ENCODE measurements at regions of chr15 and their contacts with region 1.

Region 1: GRCh38 chr15:69452692-69453521 is at the start of gene RPLP1:
- DNase-seq: peak; percentile 92 to 98 (median 96)
- ATAC-seq: peak; percentile 85
- H3K4me3 ChIP-seq: peak within 1 kb of the TSS; percentile 98
- H3K4me3 Mint-ChIP-seq: peak within 1 kb of the TSS; percentile 95
- H3K27ac ChIP-seq: peak within 1 kb of the TSS; percentile 78 to 91
- H3K27ac Mint-ChIP-seq: peak within 1 kb of the TSS; percentile 94
- H3K4me1 ChIP-seq: peaks cover 38% of the 10 kb centered on the region
- H3K4me1 Mint-ChIP-seq: peaks cover 55% of the 10 kb centered on the region
- H3K27me3 ChIP-seq: no peaks in the 10 kb centered on the region
- H3K27me3 Mint-ChIP-seq: no peaks in the 10 kb centered on the region
- CTCF ChIP-seq: no peak
- total RNA-seq, gene RPLP1: 2,527 to 2,615 TPM

Region 2: DNA sequence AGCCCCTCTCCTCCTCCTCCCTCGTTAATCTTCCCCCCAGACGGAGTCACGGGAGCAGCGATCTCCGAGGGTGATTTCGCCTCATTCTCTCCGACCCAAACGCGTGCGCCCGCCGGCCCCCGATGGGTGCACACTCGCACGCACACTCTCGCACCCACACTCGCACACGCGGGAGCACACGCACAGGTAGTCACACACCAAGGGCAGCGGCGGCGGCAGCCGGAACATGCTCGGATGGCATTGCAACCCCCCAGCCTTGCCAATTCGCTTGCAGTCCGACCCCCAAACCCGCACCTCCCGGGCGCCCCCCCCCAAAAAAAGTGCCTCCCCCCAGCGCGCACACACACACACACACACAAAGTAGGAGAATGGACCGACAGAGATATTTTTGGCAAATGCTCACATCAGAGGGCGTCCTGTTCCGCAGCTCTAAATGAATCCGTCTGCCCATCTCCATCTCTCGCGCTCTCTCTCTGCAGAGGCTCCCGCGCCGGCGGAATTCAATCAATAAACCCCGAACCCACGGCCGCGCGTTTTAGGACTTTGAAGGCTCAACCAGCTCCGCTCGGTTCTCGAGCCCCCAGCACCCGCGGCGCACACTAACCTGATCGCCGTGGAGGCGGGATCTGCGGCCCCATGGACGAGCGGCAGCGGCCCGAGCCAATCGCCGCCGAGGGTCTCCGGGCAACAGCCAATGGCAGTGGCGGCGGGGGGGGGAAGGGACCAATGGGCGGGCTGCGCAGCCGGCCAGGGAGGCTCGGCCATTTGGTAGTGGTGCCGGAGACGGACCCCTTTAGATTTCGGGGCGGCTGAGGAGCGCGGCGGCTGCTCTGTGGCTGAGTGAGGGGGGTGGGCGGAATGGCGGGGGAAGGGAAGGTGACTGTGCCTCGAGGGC is 632.4 kb before region 1 on chr15 and contains the start of gene ANP32A:
- CTCF ChIA-PET with region 1: no interaction called
- POLR2A ChIA-PET with region 1: interaction called, 9 read pairs
- intact Hi-C with region 1: loop called in 1 of 2 experiments (anchors 10 kb)
- DNase-seq: peak; percentile 94 to 99 (median 96)
- ATAC-seq: peak; percentile 62
- H3K4me3 ChIP-seq: peak within 1 kb of the TSS; percentile 98
- H3K4me3 Mint-ChIP-seq: peak within 1 kb of the TSS; percentile 95
- H3K27ac ChIP-seq: peak within 1 kb of the TSS; percentile 74 to 89
- H3K27ac Mint-ChIP-seq: peak within 1 kb of the TSS; percentile 92
- H3K4me1 ChIP-seq: peaks cover 22% of the 10 kb centered on the region
- H3K4me1 Mint-ChIP-seq: peaks cover 36% of the 10 kb centered on the region
- H3K27me3 ChIP-seq: no peaks in the 10 kb centered on the region
- H3K27me3 Mint-ChIP-seq: no peaks in the 10 kb centered on the region
- CTCF ChIP-seq: no peak
- total RNA-seq, gene ANP32A: 55.1 to 57.3 TPM

Region 3: DNA sequence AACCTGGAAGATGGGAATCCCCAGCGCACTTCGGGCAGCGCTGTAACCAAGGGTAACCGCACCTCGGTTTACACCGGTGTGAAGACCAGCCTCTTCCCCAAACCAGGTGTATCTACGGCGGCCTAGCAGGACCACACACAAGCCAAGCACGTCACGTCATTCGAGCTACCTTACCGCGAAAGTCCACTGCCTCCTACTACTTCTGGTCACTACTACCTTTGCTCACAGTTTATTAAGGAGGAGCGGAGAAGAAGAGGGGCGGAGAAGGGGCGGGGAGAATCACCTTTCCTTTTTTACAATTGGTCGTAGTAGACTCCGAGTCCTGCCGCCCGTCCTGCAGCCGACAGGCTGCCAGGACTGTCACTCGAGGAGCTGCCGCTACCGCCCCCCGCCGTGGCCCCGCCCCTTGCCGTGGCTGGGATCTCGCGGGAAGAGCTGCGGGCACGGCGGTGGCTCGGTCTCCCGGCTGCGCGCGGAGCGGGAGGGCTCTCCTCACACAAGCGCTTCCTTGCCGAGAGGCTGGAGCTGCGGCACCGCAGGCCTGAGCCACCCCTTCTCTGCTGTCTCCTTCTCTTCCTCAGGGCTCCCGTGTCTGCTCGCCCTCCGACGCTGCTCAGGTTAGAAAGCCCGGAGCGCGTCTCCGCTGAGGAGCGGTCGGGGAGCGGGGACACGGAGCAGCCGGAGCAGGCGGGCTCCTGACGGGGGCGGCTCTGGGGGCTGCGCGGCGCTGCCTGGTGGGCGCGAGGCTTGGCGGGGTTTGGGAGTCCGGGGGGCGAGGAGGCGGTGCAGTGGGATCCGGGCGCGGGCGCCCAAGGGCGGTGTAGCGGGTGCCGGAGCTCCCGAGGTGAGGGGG is 292.5 kb before region 1 on chr15 and contains the start of gene GLCE:
- CTCF ChIA-PET with region 1: no interaction called
- POLR2A ChIA-PET with region 1: interaction called, 10 read pairs
- intact Hi-C with region 1: loop called in 1 of 2 experiments (anchors 5 kb)
- DNase-seq: peak; percentile 82 to 97 (median 92)
- ATAC-seq: peak; percentile 94
- H3K4me3 ChIP-seq: peak within 1 kb of the TSS; percentile 85
- H3K4me3 Mint-ChIP-seq: peak within 1 kb of the TSS; percentile 99
- H3K27ac ChIP-seq: peak within 1 kb of the TSS; percentile 18 to 60
- H3K27ac Mint-ChIP-seq: peak within 1 kb of the TSS; percentile 81
- H3K4me1 ChIP-seq: peaks cover 17% of the 10 kb centered on the region
- H3K4me1 Mint-ChIP-seq: peaks cover 17% of the 10 kb centered on the region
- H3K27me3 ChIP-seq: no peaks in the 10 kb centered on the region
- H3K27me3 Mint-ChIP-seq: no peaks in the 10 kb centered on the region
- CTCF ChIP-seq: no peak
- total RNA-seq, gene GLCE: 3.2 TPM

Region 4: GRCh38 chr15:69413822-69414700 is 38.8 kb before region 1 on chr15 and contains the start of gene KIF23:
- CTCF ChIA-PET with region 1: no interaction called
- POLR2A ChIA-PET with region 1: interaction called, 52 read pairs
- intact Hi-C with region 1: loop called (anchors 1 to 2 kb)
- DNase-seq: peak; percentile 88 to 99 (median 91)
- ATAC-seq: peak; percentile 99
- H3K4me3 ChIP-seq: peak within 1 kb of the TSS; percentile 76
- H3K4me3 Mint-ChIP-seq: peak within 1 kb of the TSS; percentile 86
- H3K27ac ChIP-seq: no peak within 1 kb of the TSS
- H3K27ac Mint-ChIP-seq: peak within 1 kb of the TSS; percentile 2
- H3K4me1 ChIP-seq: peaks cover 19% of the 10 kb centered on the region
- H3K4me1 Mint-ChIP-seq: peaks cover 6% of the 10 kb centered on the region
- H3K27me3 ChIP-seq: peaks cover 0 to 8% of the 10 kb centered on the region in 2 experiments
- H3K27me3 Mint-ChIP-seq: peaks cover 18% of the 10 kb centered on the region
- CTCF ChIP-seq: no peak
- total RNA-seq, gene KIF23: 0.71 to 1.1 TPM

Region 5: GRCh38 chr15:69439623-69440022 is 13.3 kb before region 1 on chr15:
- CTCF ChIA-PET with region 1: interaction called, 5 read pairs
- POLR2A ChIA-PET with region 1: interaction called, 14 read pairs
- intact Hi-C with region 1: no loop called
- DNase-seq: no peak
- ATAC-seq: no peak
- H3K4me3 ChIP-seq: no peak overlapping the region
- H3K4me3 Mint-ChIP-seq: no peak overlapping the region
- H3K27ac ChIP-seq: no peak overlapping the region
- H3K27ac Mint-ChIP-seq: no peak overlapping the region
- H3K4me1 ChIP-seq: peaks cover 5% of the 10 kb centered on the region
- H3K4me1 Mint-ChIP-seq: peaks cover 8% of the 10 kb centered on the region
- H3K27me3 ChIP-seq: no peaks in the 10 kb centered on the region
- H3K27me3 Mint-ChIP-seq: no peaks in the 10 kb centered on the region
- CTCF ChIP-seq: no peak

Region 6: DNA sequence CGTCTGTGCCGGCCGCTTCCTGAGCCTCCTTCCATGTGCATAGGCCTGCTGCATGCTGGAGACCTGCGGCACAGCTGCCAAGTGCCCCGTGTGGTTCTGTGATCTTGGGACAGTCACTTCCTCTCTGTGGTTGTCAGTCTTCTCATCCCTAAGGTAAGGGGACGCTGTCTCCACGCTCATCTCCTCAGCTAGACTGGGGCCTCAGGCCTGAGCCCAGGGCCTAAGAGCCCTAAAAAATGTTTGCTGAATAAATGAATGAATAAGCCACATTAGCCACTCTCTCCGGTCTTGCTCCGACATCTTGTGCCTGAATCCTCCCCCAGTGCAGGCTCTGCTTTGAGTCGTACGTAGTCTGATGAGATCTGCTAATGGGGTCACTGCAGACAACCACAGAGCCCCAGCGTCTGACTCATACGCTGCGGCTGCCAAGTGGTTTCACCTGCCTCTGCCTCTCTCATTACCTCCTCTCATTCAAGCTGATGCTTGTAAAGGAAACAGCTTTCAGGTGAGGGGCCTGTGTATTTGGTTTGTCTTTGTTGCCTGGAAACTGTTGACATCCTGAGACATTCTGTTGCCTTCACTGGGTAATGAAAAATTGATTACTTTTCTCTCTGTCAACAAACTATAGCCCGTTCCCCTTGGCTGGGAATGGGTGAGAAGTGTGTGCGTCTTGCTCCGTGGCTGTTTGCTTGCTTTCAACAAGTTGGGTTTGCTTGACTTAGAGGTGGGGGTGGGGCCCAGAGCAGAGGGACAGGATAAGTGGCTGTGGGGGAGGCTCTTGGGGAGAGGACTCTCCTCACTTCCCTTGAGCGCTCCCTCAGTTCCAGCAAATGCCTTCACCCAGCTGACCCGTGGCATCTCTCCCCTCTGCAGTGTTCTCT is 15.6 kb after region 1 on chr15:
- CTCF ChIA-PET with region 1: interaction called, 61 read pairs
- POLR2A ChIA-PET with region 1: interaction called, 205 read pairs
- intact Hi-C with region 1: loop called (anchors 1 to 2 kb)
- DNase-seq: peak; percentile 74 to 97 (median 81)
- ATAC-seq: peak; percentile 88
- H3K4me3 ChIP-seq: peak overlapping the region; percentile 15
- H3K4me3 Mint-ChIP-seq: peak overlapping the region; percentile 70
- H3K27ac ChIP-seq: peak overlapping the region; percentile 91
- H3K27ac Mint-ChIP-seq: peak overlapping the region; percentile 90
- H3K4me1 ChIP-seq: peaks cover 39% of the 10 kb centered on the region
- H3K4me1 Mint-ChIP-seq: peaks cover 29% of the 10 kb centered on the region
- H3K27me3 ChIP-seq: no peaks in the 10 kb centered on the region
- H3K27me3 Mint-ChIP-seq: no peaks in the 10 kb centered on the region
- CTCF ChIP-seq: no peak

Region 7: GRCh38 chr15:69876059-69876940 is 423.4 kb after region 1 on chr15:
- CTCF ChIA-PET with region 1: no interaction called
- POLR2A ChIA-PET with region 1: no interaction called
- intact Hi-C with region 1: no loop called
- DNase-seq: no peak
- ATAC-seq: no peak
- H3K4me3 ChIP-seq: no peak overlapping the region
- H3K4me3 Mint-ChIP-seq: no peak overlapping the region
- H3K27ac ChIP-seq: no peak overlapping the region
- H3K27ac Mint-ChIP-seq: no peak overlapping the region
- H3K4me1 ChIP-seq: no peaks in the 10 kb centered on the region
- H3K4me1 Mint-ChIP-seq: no peaks in the 10 kb centered on the region
- H3K27me3 ChIP-seq: no peaks in the 10 kb centered on the region
- H3K27me3 Mint-ChIP-seq: no peaks in the 10 kb centered on the region
- CTCF ChIP-seq: no peak

Measured in CD4-positive, alpha-beta T cell (primary cell).